ENCODE measurements at regions of chr15 and their contacts with region 1.

Region 1: GRCh38 chr15:71800835-71801745 is 9.3 kb upstream of the NR2E3 start:
- DNase-seq: no peak
- ATAC-seq: peak; percentile 77

Region 2: GRCh38 chr15:71611551-71612396 is 189.3 kb before region 1 on chr15:
- intact Hi-C with region 1: no loop called
- DNase-seq: no peak
- ATAC-seq: peak; percentile 45

Region 3: GRCh38 chr15:71743861-71744382 is 57.2 kb before region 1 on chr15:
- intact Hi-C with region 1: loop called (anchors 2 kb)
- DNase-seq: no peak
- ATAC-seq: no peak